ENCODE measurements at regions of chr7 and their contacts with region 1.

Region 1: DNA sequence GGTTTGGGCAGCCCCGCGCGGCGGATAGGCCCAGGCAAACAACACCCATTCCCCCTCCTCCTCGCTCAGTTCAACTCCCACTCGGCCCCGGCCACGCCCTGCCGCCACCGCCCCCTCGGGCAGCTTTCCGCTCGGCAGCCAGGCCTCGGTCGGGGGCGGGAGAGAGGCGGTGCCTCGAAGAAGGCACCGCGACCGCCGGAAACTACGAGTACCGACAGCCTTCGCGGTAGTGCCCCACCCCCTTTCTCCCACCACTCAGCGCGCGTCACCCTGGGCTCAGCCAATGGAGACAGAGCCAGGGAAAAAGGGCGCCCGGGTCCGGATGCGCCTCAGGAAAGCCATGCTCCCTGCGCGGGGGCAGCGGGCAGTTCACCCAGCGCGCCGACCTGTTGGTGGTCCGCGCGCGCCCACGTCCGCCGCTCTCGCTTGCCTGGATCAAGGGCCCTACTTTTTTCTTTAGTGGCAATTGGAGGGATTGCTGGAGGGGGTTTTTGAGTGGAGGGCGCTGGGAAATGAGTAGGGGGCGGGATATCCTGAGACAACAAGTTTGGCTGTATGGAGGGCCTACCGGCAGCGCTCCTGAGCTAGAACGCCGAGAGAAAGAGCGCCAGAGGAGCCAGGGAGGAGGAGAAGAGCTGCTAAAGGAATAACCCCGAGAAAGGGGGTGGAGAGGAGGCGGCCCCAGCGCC is 557 bp upstream of the SP4 start:
- DNase-seq: peak; percentile 98 to 100 (median 99)

Region 2: DNA sequence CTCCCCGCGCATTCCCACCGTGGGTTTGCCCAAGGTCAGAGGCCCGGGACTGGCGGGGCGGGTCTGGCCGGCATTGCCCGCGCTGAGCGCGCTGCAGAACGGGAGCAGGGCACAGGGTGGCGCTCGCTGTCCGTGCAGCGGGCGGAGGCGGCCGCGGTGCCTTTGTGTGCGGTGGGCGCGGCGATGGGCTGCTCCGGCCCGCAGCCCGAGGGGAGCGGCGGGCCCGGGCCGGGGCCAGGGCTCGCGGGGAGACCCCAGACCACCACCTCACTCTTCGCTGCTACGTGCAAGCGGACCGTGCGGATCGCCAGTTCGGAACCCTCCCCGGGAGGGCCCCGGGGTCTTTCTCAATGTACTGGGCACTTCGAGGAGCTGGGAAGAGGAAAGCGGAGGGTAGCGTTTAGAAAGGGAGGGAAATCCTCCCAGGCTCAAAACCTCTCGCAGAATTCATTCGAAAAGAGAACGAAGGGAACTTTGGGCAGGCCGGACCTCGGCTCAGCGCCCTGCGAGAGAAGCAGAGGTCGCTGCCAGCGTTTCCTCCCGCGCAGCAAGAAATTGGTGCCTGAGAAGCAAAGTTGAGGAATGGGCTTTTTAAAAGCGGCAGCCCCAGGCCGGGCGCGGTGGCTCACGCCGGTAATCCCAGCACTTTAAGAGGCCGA is 649.1 kb before region 1 on chr7:
- intact Hi-C with region 1: loop called (anchors 10 kb)
- DNase-seq: peak in 7 of 10 donors; percentile 31 to 92 (median 59)

Measured in posterior cingulate gyrus (tissue), 11 donors.